Posterior vena cava (tissue), 2 donors: ENCODE measurements at regions of chr15 and their contacts with region 1.

Region 1: GRCh38 chr15:32743411-32744140 is 25.8 kb downstream of the GREM1 start:
- DNase-seq: no peak

Region 2: DNA sequence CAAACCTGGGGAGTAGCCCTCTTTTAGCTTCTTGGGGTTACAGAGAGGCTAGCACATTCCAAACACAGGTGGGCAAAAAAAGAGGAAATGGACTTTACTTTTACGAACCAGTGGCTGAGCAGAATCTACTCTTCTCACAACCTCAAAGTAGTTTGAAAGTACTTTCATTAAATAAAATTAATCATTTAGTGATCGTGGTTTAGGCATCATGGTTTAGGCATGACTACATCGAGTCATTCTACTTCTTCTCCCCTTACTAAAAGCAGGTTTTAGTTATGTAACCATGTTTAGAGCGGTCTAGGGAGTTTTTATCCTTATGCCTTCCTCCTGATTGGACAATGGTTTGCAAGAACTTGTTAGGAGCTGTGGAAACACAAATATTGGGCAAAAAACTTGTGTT is 28.3 kb before region 1 on chr15:
- intact Hi-C with region 1: no loop called
- DNase-seq: no peak

Region 3: DNA sequence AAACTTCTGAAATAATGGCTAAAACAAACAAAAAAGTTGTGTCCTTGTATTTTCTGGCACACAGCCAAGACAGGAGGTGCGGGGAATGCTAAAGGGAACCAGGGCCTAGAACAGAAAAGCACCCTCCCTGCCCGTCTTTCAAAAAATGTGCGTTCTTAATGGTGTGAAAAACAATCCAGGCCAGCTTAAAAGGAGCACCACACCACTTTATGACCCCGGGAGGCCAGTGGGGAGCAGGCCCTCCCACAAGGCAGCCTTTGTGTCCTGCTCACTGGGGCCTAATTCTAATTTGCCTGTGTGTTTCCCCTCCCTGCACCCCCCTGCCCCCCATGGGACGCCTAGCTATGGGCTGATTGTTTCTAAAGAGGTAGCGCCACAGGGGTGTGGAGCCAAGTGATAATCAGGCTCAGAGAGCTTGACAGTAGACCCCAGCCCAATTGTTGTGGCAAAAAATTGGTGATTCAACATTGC is 155.6 kb after region 1 on chr15:
- intact Hi-C with region 1: no loop called
- DNase-seq: no peak

Region 4: DNA sequence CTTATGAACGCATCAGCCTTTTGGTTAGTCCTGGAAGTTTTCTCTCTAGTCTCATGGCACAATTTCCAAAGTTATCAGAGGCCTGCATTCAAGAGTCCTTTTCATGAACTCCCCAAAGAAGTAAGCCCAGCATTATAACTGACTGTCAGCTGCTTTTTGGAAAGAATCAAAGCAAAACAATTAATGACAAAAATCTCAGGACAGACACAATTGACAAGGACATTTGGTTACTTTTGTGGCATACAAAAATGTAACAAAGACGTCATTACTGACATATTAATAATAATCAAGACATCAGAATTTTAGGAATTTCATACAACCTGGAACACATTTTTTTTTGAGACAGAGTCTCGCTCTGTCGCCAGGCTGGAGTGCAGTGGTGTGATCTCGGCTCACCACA is 1445.1 kb after region 1 on chr15:
- intact Hi-C with region 1: loop called in 1 of 2 experiments (anchors 5 kb)
- DNase-seq: no peak